Activated CD8-positive, alpha-beta T cell treated with anti-CD3 and anti-CD28 coated beads for 36 hours (primary cell): ENCODE measurements at regions of chr13 and their contacts with region 1.

Region 1: DNA sequence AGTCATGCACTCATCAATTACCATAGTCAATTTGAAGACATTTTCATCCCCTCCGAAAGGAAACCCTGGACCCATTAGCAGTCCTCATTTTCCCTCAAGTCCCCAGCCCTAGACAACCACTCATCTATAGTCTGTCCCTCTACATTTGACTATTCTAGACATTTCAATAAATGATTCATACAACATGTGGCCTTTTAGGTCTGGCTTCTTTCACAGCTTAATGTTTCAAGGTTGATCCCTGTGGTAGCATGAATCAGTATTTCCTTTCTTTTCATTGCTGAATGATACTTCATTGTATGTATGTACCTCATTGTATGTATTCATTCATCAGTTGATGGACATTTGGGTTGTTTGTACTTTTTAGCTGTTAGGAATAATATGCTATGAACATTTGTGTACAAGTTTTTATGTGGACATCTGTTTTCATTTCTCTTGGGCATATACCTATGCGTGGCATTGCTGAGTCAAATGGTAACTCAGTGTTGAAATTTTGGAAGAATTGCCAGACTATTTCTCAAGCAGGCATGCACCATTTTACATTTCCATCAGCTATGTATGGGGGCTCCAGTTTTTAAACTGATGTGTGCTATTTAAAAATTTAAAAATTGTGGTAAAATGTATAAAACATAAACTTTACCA is 18.4 kb downstream of the SPATA13 start:
- DNase-seq: peak; percentile 15
- ATAC-seq: peak; percentile 96
- H3K4me3 Mint-ChIP-seq: no peak overlapping the region
- H3K27ac Mint-ChIP-seq: peak overlapping the region; percentile 85
- H3K4me1 Mint-ChIP-seq: peaks cover 65% of the 10 kb centered on the region
- H3K27me3 Mint-ChIP-seq: no peaks in the 10 kb centered on the region
- CTCF ChIP-seq: no peak

Region 2: GRCh38 chr13:24168392-24168750 is 10.6 kb before region 1 on chr13:
- CTCF ChIA-PET with region 1: interaction called, 10 read pairs
- POLR2A ChIA-PET with region 1: interaction called, 11 read pairs
- intact Hi-C with region 1: no loop called
- DNase-seq: peak; percentile 64
- ATAC-seq: peak; percentile 96
- H3K4me3 Mint-ChIP-seq: peak overlapping the region; percentile 2
- H3K27ac Mint-ChIP-seq: peak overlapping the region; percentile 82
- H3K4me1 Mint-ChIP-seq: peaks cover 51% of the 10 kb centered on the region
- H3K27me3 Mint-ChIP-seq: no peaks in the 10 kb centered on the region
- CTCF ChIP-seq: no peak